ENCODE measurements at regions of chr17 and their contacts with region 1.

Region 1: GRCh38 chr17:74961657-74962490 is 10.7 kb downstream of the HID1 start:
- DNase-seq: no peak
- ATAC-seq: peak; percentile 82
- H3K4me3 ChIP-seq: no peak overlapping the region
- H3K27ac ChIP-seq: no peak overlapping the region
- H3K4me1 ChIP-seq: peaks cover 3% of the 10 kb centered on the region; the same call in 1 of the 2 replicates
- H3K27me3 ChIP-seq: no peaks in the 10 kb centered on the region
- CTCF ChIP-seq: peak; percentile 81

Region 2: GRCh38 chr17:74677558-74678466 is 284.1 kb before region 1 on chr17:
- CTCF ChIA-PET with region 1: no interaction called
- POLR2A ChIA-PET with region 1: no interaction called
- in situ Hi-C with region 1: no loop called
- intact Hi-C with region 1: no loop called
- DNase-seq: no peak
- ATAC-seq: peak; percentile 70; the same call in 1 of the 2 replicates
- H3K4me3 ChIP-seq: no peak overlapping the region
- H3K27ac ChIP-seq: no peak overlapping the region
- H3K4me1 ChIP-seq: no peaks in the 10 kb centered on the region
- H3K27me3 ChIP-seq: peaks cover 24% of the 10 kb centered on the region
- CTCF ChIP-seq: no peak

Region 3: GRCh38 chr17:74815550-74816370 is 146.1 kb before region 1 on chr17:
- CTCF ChIA-PET with region 1: no interaction called
- POLR2A ChIA-PET with region 1: no interaction called
- in situ Hi-C with region 1: no loop called
- intact Hi-C with region 1: no loop called
- DNase-seq: no peak
- ATAC-seq: peak; percentile 28; the same call in 1 of the 2 replicates
- H3K4me3 ChIP-seq: no peak overlapping the region
- H3K27ac ChIP-seq: no peak overlapping the region
- H3K4me1 ChIP-seq: no peaks in the 10 kb centered on the region
- H3K27me3 ChIP-seq: no peaks in the 10 kb centered on the region
- CTCF ChIP-seq: no peak

Region 4: GRCh38 chr17:74864866-74865395 is 96.9 kb before region 1 on chr17:
- CTCF ChIA-PET with region 1: interaction called, 15 read pairs
- POLR2A ChIA-PET with region 1: no interaction called
- in situ Hi-C with region 1: no loop called
- intact Hi-C with region 1: no loop called
- DNase-seq: peak; percentile 47
- ATAC-seq: peak; percentile 64
- H3K4me3 ChIP-seq: no peak overlapping the region
- H3K27ac ChIP-seq: no peak overlapping the region
- H3K4me1 ChIP-seq: peaks cover 18% of the 10 kb centered on the region
- H3K27me3 ChIP-seq: peaks cover 10% of the 10 kb centered on the region; the same call in 1 of the 2 replicates
- CTCF ChIP-seq: peak; percentile 98

Region 5: DNA sequence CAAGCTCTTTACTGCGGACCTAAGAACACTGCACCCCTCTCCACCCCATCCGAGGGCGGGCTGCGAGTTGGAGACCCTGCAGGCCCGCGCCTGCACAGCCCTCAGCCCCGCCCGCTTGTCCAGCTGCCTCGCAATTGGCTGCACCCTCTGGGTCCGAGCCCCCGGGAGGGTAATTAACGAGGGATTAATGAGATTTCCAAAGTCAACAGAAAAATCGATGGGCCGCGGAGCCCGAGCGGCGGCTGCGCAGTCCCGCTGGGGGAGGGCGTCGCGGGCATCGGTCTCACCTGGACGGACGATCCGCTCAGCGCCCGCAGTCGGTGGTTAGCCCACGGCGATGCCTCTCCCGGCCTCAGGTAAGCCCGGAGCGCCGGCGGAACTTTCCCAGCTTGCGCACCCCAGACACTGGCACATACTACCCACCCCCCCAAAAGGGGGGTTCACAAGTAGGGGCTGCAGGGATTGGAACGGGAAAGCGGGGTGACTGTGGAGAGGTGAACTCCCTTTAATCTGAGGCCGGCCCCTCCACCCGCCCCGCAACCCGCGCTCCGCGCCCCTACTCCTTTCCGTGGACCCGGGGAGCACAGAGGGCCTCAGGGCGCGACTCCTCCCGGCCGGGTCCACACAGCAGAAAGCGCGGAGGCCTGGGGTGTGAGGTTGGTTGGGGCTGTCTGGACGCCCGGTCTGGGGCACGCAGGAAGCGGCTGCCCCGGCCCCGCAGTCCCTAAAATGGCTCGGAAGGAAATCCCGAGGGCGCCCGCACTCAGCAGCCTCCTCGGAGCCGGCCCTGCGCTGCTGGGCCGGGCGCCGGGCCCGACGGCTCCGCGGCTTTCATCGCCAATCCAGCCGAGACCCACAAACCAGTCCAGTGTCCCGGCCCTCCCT is 26.0 kb before region 1 on chr17 and contains the start of gene OTOP3:
- CTCF ChIA-PET with region 1: interaction called, 14 read pairs
- POLR2A ChIA-PET with region 1: interaction called, 11 read pairs
- in situ Hi-C with region 1: no loop called
- intact Hi-C with region 1: no loop called
- DNase-seq: no peak
- ATAC-seq: peak; percentile 60
- H3K4me3 ChIP-seq: no peak within 1 kb of the TSS
- H3K27ac ChIP-seq: no peak within 1 kb of the TSS
- H3K4me1 ChIP-seq: no peaks in the 10 kb centered on the region
- H3K27me3 ChIP-seq: peaks cover 13% of the 10 kb centered on the region; the same call in 1 of the 2 replicates
- CTCF ChIP-seq: no peak
- total RNA-seq, gene OTOP3: not detected

Region 6: GRCh38 chr17:74978240-74978639 is 16.4 kb after region 1 on chr17:
- CTCF ChIA-PET with region 1: interaction called, 16 read pairs
- POLR2A ChIA-PET with region 1: no interaction called
- in situ Hi-C with region 1: no loop called
- intact Hi-C with region 1: no loop called
- DNase-seq: no peak
- ATAC-seq: no peak
- H3K4me3 ChIP-seq: no peak overlapping the region
- H3K27ac ChIP-seq: no peak overlapping the region
- H3K4me1 ChIP-seq: peaks cover 11% of the 10 kb centered on the region
- H3K27me3 ChIP-seq: no peaks in the 10 kb centered on the region
- CTCF ChIP-seq: no peak

Region 7: DNA sequence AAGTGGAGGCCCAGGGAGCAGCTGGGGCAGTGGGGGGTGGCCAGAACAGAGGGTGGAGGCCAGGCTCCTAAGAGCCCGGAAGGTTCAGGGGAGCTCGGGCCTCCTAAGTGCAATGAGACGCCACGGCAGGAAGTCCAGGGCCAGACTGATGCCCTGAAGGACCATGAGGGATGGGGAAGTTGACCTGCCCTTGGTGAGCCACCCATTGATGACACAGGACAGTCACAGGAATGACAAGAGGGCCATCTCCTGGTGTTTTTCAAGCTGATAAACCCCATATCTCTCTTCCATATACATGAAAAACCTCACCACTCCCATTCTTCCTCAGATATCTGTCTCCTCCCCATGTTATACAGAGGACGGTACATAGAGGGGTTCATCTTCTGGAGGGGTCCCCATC is 44.8 kb after region 1 on chr17:
- CTCF ChIA-PET with region 1: interaction called, 33 read pairs
- POLR2A ChIA-PET with region 1: interaction called, 5 read pairs
- in situ Hi-C with region 1: no loop called
- intact Hi-C with region 1: loop called (anchors 5 kb)
- DNase-seq: no peak
- ATAC-seq: no peak
- H3K4me3 ChIP-seq: no peak overlapping the region
- H3K27ac ChIP-seq: no peak overlapping the region
- H3K4me1 ChIP-seq: peaks cover 7% of the 10 kb centered on the region
- H3K27me3 ChIP-seq: no peaks in the 10 kb centered on the region
- CTCF ChIP-seq: no peak

Region 8: DNA sequence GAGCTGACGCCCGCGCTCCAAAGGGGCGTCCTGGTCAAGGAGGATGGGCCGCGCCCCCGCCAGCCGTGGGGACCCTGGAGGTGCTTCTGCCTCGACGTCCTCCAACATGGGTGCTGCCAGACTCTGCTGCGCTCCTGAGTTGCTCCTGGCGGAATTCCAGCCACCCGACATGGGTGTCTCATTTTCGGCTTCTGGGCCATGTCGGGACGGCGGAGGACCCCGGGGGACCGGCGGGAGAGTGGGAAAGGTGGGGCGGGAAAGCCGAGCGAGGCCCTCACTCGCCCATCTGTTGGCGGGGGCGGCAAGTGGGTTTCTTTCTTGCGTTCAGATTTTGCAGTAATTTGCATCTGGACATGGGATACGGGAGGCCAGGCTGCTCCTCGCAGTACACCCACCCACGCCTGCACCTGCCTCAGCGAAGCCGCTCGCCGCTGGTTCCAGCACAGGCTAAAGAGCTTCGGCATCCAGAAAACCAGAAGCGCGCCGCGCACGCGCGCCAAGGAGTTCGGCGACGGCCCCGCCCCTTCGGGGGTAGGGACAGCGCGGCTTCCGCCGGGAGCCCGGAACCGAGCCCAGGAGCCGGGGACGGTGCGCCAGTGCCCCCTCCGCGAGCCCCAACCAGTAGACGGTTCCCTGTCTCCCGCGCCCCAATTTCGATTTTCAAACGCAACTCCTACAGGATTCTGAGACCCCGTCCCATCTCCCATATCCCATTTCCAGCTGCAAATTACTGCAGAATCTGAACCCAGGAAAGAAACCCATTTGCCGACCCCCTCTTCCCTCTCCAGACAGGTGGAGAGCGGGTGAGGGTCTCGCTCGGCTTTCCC is 147.7 kb after region 1 on chr17 and contains the start of gene ARMC7:
- CTCF ChIA-PET with region 1: interaction called, 21 read pairs
- POLR2A ChIA-PET with region 1: interaction called, 3 read pairs
- in situ Hi-C with region 1: no loop called
- intact Hi-C with region 1: no loop called
- DNase-seq: no peak
- ATAC-seq: peak; percentile 78
- H3K4me3 ChIP-seq: peak within 1 kb of the TSS; percentile 83 to 88
- H3K27ac ChIP-seq: peak within 1 kb of the TSS; percentile 88
- H3K4me1 ChIP-seq: peaks cover 42% of the 10 kb centered on the region
- H3K27me3 ChIP-seq: no peaks in the 10 kb centered on the region
- CTCF ChIP-seq: no peak
- total RNA-seq, gene ARMC7: 48.7 TPM